ENCODE measurements at regions of chr12 and their contacts with region 1.

Region 1: GRCh38 chr12:38906482-38907170 is 1.2 kb upstream of the CPNE8 start:
- DNase-seq: peak; percentile 56
- ATAC-seq: peak; percentile 71
- H3K4me3 ChIP-seq: peak overlapping the region; percentile 82
- H3K27ac ChIP-seq: peak overlapping the region; percentile 95
- H3K4me1 ChIP-seq: no peaks in the 10 kb centered on the region; the same call in 1 of the 2 replicates
- H3K27me3 ChIP-seq: no peaks in the 10 kb centered on the region
- CTCF ChIP-seq: peak; percentile 88 to 92 (median 89)
- EP300 ChIP-seq: 0 out of 4 replicates have a peak, but pooled peaks of 1 of the 2 experiments have one; percentile 17
- POLR2A ChIP-seq: peak; percentile 78
- RAD21 ChIP-seq: peak; percentile 82

Region 2: GRCh38 chr12:38138225-38139221 is 768.1 kb before region 1 on chr12:
- CTCF ChIA-PET with region 1: interaction called, 7 read pairs
- POLR2A ChIA-PET with region 1: no interaction called
- RAD21 ChIA-PET with region 1: interaction called, 4 read pairs
- SMC1A ChIA-PET with region 1: interaction called, 3 read pairs
- in situ Hi-C with region 1: loop called (anchors 10 kb)
- intact Hi-C with region 1: no loop called
- DNase-seq: peak; percentile 23
- ATAC-seq: peak; percentile 73
- H3K4me3 ChIP-seq: no peak overlapping the region
- H3K27ac ChIP-seq: no peak overlapping the region
- H3K4me1 ChIP-seq: no peaks in the 10 kb centered on the region
- H3K27me3 ChIP-seq: no peaks in the 10 kb centered on the region
- CTCF ChIP-seq: peak; percentile 82 to 94 (median 88)
- EP300 ChIP-seq: no peak
- POLR2A ChIP-seq: no peak
- RAD21 ChIP-seq: peak; percentile 81

Region 3: GRCh38 chr12:38350342-38351174 is 556.1 kb before region 1 on chr12:
- CTCF ChIA-PET with region 1: interaction called, 7 read pairs
- POLR2A ChIA-PET with region 1: interaction called, 8 read pairs
- RAD21 ChIA-PET with region 1: interaction called, 14 read pairs
- SMC1A ChIA-PET with region 1: interaction called, 7 read pairs
- in situ Hi-C with region 1: loop called (anchors 5 kb)
- intact Hi-C with region 1: loop called (anchors 5 kb)
- DNase-seq: peak; percentile 78
- ATAC-seq: peak; percentile 100
- H3K4me3 ChIP-seq: peak overlapping the region; percentile 2; the same call in 1 of the 2 replicates
- H3K27ac ChIP-seq: peak overlapping the region; percentile 77
- H3K4me1 ChIP-seq: peaks cover 5% of the 10 kb centered on the region
- H3K27me3 ChIP-seq: no peaks in the 10 kb centered on the region
- CTCF ChIP-seq: no peak
- EP300 ChIP-seq: peak; percentile 77 to 93
- POLR2A ChIP-seq: no peak
- RAD21 ChIP-seq: no peak

Region 4: GRCh38 chr12:38689704-38690103 is 216.9 kb before region 1 on chr12:
- CTCF ChIA-PET with region 1: no interaction called
- POLR2A ChIA-PET with region 1: no interaction called
- RAD21 ChIA-PET with region 1: interaction called, 3 read pairs
- SMC1A ChIA-PET with region 1: interaction called, 4 read pairs
- in situ Hi-C with region 1: loop called (anchors 25 kb)
- intact Hi-C with region 1: no loop called
- DNase-seq: no peak
- ATAC-seq: no peak
- H3K4me3 ChIP-seq: no peak overlapping the region
- H3K27ac ChIP-seq: no peak overlapping the region
- H3K4me1 ChIP-seq: no peaks in the 10 kb centered on the region
- H3K27me3 ChIP-seq: no peaks in the 10 kb centered on the region
- CTCF ChIP-seq: no peak
- EP300 ChIP-seq: no peak
- POLR2A ChIP-seq: no peak
- RAD21 ChIP-seq: no peak

Region 5: GRCh38 chr12:38872561-38872960 is 34.1 kb before region 1 on chr12:
- CTCF ChIA-PET with region 1: interaction called, 6 read pairs
- POLR2A ChIA-PET with region 1: interaction called, 4 read pairs
- RAD21 ChIA-PET with region 1: interaction called, 170 read pairs
- SMC1A ChIA-PET with region 1: interaction called, 11 read pairs
- in situ Hi-C with region 1: no loop called
- intact Hi-C with region 1: no loop called
- DNase-seq: no peak
- ATAC-seq: no peak
- H3K4me3 ChIP-seq: no peak overlapping the region
- H3K27ac ChIP-seq: no peak overlapping the region
- H3K4me1 ChIP-seq: no peaks in the 10 kb centered on the region
- H3K27me3 ChIP-seq: no peaks in the 10 kb centered on the region
- CTCF ChIP-seq: no peak
- EP300 ChIP-seq: no peak
- POLR2A ChIP-seq: no peak
- RAD21 ChIP-seq: no peak

Region 6: GRCh38 chr12:38892090-38892786 is 14.4 kb before region 1 on chr12:
- CTCF ChIA-PET with region 1: interaction called, 32 read pairs
- POLR2A ChIA-PET with region 1: interaction called, 36 read pairs
- RAD21 ChIA-PET with region 1: interaction called, 170 read pairs
- SMC1A ChIA-PET with region 1: interaction called, 66 read pairs
- in situ Hi-C with region 1: no loop called
- intact Hi-C with region 1: no loop called
- DNase-seq: no peak
- ATAC-seq: peak; percentile 84
- H3K4me3 ChIP-seq: no peak overlapping the region
- H3K27ac ChIP-seq: peak overlapping the region; percentile 5; the same call in 1 of the 2 replicates
- H3K4me1 ChIP-seq: no peaks in the 10 kb centered on the region
- H3K27me3 ChIP-seq: no peaks in the 10 kb centered on the region
- CTCF ChIP-seq: no peak
- EP300 ChIP-seq: no peak
- POLR2A ChIP-seq: no peak
- RAD21 ChIP-seq: no peak

Region 7: DNA sequence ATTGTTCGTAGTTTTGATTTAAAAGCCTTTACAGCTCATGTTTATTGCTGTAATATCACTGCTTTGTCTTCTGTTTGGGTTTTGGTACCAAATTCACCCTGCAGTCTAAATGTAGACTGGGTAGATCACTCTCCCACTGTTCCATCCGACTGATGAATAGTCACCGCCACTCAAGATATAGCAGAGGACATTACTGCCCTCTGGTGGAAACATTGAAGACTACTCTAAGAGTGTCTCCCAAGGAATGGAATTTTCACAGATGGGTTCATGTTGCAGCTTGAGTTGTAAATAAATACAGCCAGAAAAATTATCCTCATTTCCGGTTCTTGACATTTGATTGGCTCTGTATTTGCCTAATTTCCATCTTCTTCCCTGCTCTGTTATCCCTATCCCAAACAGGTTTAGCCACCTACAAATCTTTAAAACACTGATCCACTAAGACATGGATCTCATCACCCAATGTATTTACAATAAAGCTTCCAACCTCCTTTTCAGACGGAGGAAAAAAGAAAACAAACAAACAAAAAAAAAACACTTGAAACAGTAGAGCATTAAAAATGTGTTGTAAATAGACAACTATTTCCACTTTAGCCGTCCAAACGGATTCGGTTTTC is 197.0 kb after region 1 on chr12:
- CTCF ChIA-PET with region 1: interaction called, 11 read pairs
- POLR2A ChIA-PET with region 1: no interaction called
- RAD21 ChIA-PET with region 1: interaction called, 3 read pairs
- SMC1A ChIA-PET with region 1: interaction called, 7 read pairs
- in situ Hi-C with region 1: no loop called
- intact Hi-C with region 1: no loop called
- DNase-seq: peak; percentile 15
- ATAC-seq: peak; percentile 99
- H3K4me3 ChIP-seq: no peak overlapping the region
- H3K27ac ChIP-seq: no peak overlapping the region
- H3K4me1 ChIP-seq: no peaks in the 10 kb centered on the region
- H3K27me3 ChIP-seq: no peaks in the 10 kb centered on the region
- CTCF ChIP-seq: peak; percentile 66 to 77 (median 67)
- EP300 ChIP-seq: no peak
- POLR2A ChIP-seq: no peak
- RAD21 ChIP-seq: peak; percentile 94

Region 8: GRCh38 chr12:39157696-39158342 is 251.2 kb after region 1 on chr12:
- CTCF ChIA-PET with region 1: no interaction called
- POLR2A ChIA-PET with region 1: no interaction called
- RAD21 ChIA-PET with region 1: no interaction called
- SMC1A ChIA-PET with region 1: no interaction called
- in situ Hi-C with region 1: no loop called
- intact Hi-C with region 1: no loop called
- DNase-seq: no peak
- ATAC-seq: no peak
- H3K4me3 ChIP-seq: no peak overlapping the region
- H3K27ac ChIP-seq: no peak overlapping the region
- H3K4me1 ChIP-seq: no peaks in the 10 kb centered on the region
- H3K27me3 ChIP-seq: no peaks in the 10 kb centered on the region
- CTCF ChIP-seq: no peak
- EP300 ChIP-seq: no peak
- POLR2A ChIP-seq: no peak
- RAD21 ChIP-seq: no peak

Measured in GM12878 (cell line).